ENCODE measurements at regions of chr11 and their contacts with region 1.

Region 1: GRCh38 chr11:61041755-61042518 is 60.4 kb upstream of the CD5 start:
- DNase-seq: peak; percentile 92
- ATAC-seq: peak; percentile 94
- H3K4me3 Mint-ChIP-seq: peak overlapping the region; percentile 64
- H3K27ac Mint-ChIP-seq: peak overlapping the region; percentile 91
- H3K4me1 Mint-ChIP-seq: peaks cover 72% of the 10 kb centered on the region
- H3K27me3 Mint-ChIP-seq: no peaks in the 10 kb centered on the region

Region 2: GRCh38 chr11:61021661-61022212 is 20.2 kb before region 1 on chr11:
- CTCF ChIA-PET with region 1: interaction called, 5 read pairs
- POLR2A ChIA-PET with region 1: interaction called, 40 read pairs
- intact Hi-C with region 1: loop called (anchors 2 kb)
- DNase-seq: peak; percentile 94
- ATAC-seq: peak; percentile 50
- H3K4me3 Mint-ChIP-seq: peak overlapping the region; percentile 79
- H3K27ac Mint-ChIP-seq: peak overlapping the region; percentile 97
- H3K4me1 Mint-ChIP-seq: peaks cover 92% of the 10 kb centered on the region
- H3K27me3 Mint-ChIP-seq: no peaks in the 10 kb centered on the region

Region 3: GRCh38 chr11:61054927-61055562 is 13.1 kb after region 1 on chr11:
- CTCF ChIA-PET with region 1: interaction called, 14 read pairs
- POLR2A ChIA-PET with region 1: interaction called, 7 read pairs
- intact Hi-C with region 1: loop called (anchors 1 to 2 kb)
- DNase-seq: peak; percentile 79
- ATAC-seq: peak; percentile 77
- H3K4me3 Mint-ChIP-seq: peak overlapping the region; percentile 42
- H3K27ac Mint-ChIP-seq: peak overlapping the region; percentile 92
- H3K4me1 Mint-ChIP-seq: peaks cover 87% of the 10 kb centered on the region
- H3K27me3 Mint-ChIP-seq: no peaks in the 10 kb centered on the region

Region 4: GRCh38 chr11:61091373-61092279 is 49.7 kb after region 1 on chr11:
- CTCF ChIA-PET with region 1: interaction called, 3 read pairs
- POLR2A ChIA-PET with region 1: interaction called, 12 read pairs
- intact Hi-C with region 1: no loop called
- DNase-seq: peak; percentile 84
- ATAC-seq: peak; percentile 71
- H3K4me3 Mint-ChIP-seq: peak overlapping the region; percentile 91
- H3K27ac Mint-ChIP-seq: peak overlapping the region; percentile 98
- H3K4me1 Mint-ChIP-seq: peaks cover 63% of the 10 kb centered on the region
- H3K27me3 Mint-ChIP-seq: no peaks in the 10 kb centered on the region

Measured in activated CD4-positive, alpha-beta T cell treated with anti-CD3 and anti-CD28 coated beads for 36 hours (primary cell).